Activated CD4-positive, alpha-beta T cell treated with anti-CD3 and anti-CD28 coated beads for 36 hours (primary cell): ENCODE measurements at regions of chr12 and their contacts with region 1.

Region 1: GRCh38 chr12:12716793-12717585 is at the start of gene CDKN1B:
- DNase-seq: peak; percentile 93
- ATAC-seq: peak; percentile 69
- H3K4me3 Mint-ChIP-seq: peak within 1 kb of the TSS; percentile 93
- H3K27ac Mint-ChIP-seq: peak within 1 kb of the TSS; percentile 98
- H3K4me1 Mint-ChIP-seq: peaks cover 53% of the 10 kb centered on the region
- H3K27me3 Mint-ChIP-seq: no peaks in the 10 kb centered on the region
- total RNA-seq, gene CDKN1B: 34.2 to 37.0 TPM

Region 2: DNA sequence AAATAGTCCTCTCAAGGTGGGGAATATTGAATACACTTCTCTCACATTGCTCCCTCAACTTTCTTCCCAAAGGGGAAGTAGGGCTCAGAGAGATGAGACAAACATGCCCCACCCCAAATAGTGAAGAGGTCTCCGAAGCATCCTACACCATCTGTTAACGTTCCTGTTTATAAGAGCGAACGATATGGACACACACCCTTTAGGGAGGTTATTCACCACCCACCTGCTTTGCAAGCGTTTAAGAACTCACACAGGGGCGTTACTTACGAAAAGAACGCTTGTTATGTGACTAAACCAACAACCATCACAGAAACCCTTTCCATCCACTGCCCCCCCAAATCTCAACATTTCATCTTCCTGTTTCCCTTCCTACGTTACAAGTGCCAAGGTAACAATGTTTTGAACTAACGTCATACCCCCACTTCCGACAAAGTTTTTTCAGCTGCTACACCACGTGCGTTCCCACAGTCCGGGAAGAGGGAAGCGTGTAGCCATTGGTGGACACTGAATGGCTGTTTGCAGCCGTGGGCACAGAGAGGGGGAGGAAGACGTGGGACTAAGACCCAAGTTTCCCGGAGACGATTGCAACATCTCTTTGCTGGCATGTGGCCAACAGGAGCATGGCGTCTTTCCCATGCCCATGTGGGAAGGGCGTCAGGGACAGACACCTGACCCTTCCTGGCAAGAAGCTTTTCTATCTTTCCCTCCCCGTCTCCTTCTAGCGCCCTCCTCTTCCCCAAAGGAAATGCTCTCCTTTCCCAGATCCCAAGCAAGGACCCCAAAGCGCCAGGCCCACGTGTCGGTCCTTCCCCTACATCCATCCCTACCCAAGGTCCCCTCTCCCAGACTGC is 1995.1 kb before region 1 on chr12:
- CTCF ChIA-PET with region 1: no interaction called
- POLR2A ChIA-PET with region 1: no interaction called
- intact Hi-C with region 1: loop called in 1 of 2 experiments (anchors 10 kb)
- DNase-seq: peak; percentile 74
- ATAC-seq: peak; percentile 68
- H3K4me3 Mint-ChIP-seq: peak overlapping the region; percentile 91
- H3K27ac Mint-ChIP-seq: peak overlapping the region; percentile 91
- H3K4me1 Mint-ChIP-seq: peaks cover 25% of the 10 kb centered on the region
- H3K27me3 Mint-ChIP-seq: peaks cover 29% of the 10 kb centered on the region

Region 3: GRCh38 chr12:12356886-12357718 is 359.9 kb before region 1 on chr12 and contains the start of gene BORCS5:
- CTCF ChIA-PET with region 1: interaction called, 6 read pairs
- POLR2A ChIA-PET with region 1: interaction called, 19 read pairs
- intact Hi-C with region 1: loop called (anchors 1 to 2 kb)
- DNase-seq: peak; percentile 99
- ATAC-seq: peak; percentile 94
- H3K4me3 Mint-ChIP-seq: peak within 1 kb of the TSS; percentile 98
- H3K27ac Mint-ChIP-seq: peak within 1 kb of the TSS; percentile 99
- H3K4me1 Mint-ChIP-seq: peaks cover 38% of the 10 kb centered on the region
- H3K27me3 Mint-ChIP-seq: no peaks in the 10 kb centered on the region
- total RNA-seq, gene BORCS5: 41.8 to 45.0 TPM

Region 4: DNA sequence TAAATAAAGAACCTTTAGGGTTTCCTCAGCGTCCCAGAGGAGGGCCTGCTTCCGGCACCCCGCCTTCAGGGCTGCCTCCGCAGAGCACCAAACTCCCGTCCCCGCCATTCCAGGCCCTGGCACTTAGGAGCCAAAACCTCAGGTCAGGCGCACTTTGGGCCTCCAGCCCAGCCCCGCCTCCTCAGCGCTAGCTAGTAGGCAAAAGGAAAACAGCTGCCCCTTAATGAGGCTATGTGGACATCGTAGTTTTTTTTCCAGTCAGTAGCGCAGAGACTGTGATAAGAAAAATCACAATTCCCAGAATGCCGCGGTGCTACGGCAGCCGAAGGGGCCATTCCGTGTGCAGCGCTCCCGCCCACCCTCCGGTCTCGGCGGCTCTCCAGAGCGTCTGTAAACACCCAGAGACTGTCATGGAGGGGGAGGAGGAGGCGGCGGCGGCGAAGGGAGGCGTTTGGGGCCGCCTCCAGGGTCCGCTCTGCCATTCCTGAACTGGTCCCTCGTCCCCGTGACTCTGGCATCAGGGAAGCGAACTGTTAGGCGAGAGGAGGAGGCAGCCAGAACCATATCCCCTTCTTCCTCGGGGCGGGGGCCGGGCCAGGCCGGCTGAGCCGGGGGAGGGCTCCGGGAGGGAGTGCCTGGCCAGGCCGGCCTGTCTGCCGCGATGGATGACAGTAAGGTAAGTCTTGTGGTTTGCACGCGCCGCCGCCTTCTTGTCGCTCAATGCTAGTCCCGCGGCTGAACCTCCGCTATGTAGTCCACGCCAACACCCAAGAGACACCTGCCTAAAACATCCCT is 105.3 kb before region 1 on chr12 and contains the start of gene CREBL2:
- CTCF ChIA-PET with region 1: no interaction called
- POLR2A ChIA-PET with region 1: no interaction called
- intact Hi-C with region 1: loop called in 1 of 2 experiments (anchors 5 kb)
- DNase-seq: peak; percentile 92
- ATAC-seq: peak; percentile 77
- H3K4me3 Mint-ChIP-seq: peak within 1 kb of the TSS; percentile 93
- H3K27ac Mint-ChIP-seq: peak within 1 kb of the TSS; percentile 98
- H3K4me1 Mint-ChIP-seq: peaks cover 68% of the 10 kb centered on the region
- H3K27me3 Mint-ChIP-seq: no peaks in the 10 kb centered on the region
- total RNA-seq, gene CREBL2: 16.8 to 20.2 TPM

Region 5: DNA sequence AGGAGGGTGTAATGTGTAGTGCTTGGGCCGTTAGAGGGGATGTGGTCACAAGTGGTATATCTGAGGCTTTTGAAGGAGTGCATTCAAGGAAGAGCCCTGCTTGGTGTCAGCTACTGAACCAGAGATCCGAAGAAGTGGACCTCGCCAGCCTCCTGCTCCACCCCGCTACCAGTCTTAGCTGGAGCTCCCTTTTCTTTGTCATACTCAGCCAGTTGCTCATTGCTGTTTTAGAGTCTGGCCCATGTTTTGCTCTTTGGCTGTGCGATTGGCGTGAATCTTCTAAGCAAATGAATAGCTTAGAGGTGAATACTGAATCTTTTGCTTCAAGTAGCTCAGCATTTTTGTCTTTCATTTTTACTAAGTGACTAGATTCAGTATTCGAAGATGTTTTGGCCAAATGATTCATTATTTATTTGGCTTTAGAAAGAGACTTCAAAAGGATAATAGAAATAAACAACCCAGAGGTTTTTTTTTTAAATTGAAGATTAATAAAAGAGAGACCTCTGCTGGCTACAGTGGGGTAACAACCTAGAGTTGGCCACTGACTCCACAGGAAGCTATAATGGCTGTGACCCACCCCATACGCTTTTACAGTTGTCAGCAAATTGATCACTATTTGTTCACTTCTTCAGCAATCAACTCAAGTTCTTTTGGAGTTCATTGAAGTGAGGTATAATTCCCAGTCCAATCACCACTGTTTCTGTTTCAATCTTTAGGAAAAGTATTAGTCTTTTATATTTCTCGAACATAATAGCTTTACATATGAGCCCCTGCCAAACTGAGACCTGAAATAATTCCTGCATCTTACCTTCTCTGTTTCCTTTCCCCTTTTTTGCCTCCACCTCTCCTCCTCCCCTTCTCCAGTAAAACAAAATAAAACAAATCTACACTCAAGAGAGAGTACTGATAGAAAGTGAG is 20.0 kb after region 1 on chr12:
- CTCF ChIA-PET with region 1: interaction called, 53 read pairs
- POLR2A ChIA-PET with region 1: interaction called, 5 read pairs
- intact Hi-C with region 1: no loop called
- DNase-seq: peak; percentile 65
- ATAC-seq: peak; percentile 87
- H3K4me3 Mint-ChIP-seq: peak overlapping the region; percentile 32
- H3K27ac Mint-ChIP-seq: peak overlapping the region; percentile 75
- H3K4me1 Mint-ChIP-seq: peaks cover 35% of the 10 kb centered on the region
- H3K27me3 Mint-ChIP-seq: no peaks in the 10 kb centered on the region